A673 (cell line): ENCODE measurements at regions of chr20 and their contacts with region 1.

Region 1: DNA sequence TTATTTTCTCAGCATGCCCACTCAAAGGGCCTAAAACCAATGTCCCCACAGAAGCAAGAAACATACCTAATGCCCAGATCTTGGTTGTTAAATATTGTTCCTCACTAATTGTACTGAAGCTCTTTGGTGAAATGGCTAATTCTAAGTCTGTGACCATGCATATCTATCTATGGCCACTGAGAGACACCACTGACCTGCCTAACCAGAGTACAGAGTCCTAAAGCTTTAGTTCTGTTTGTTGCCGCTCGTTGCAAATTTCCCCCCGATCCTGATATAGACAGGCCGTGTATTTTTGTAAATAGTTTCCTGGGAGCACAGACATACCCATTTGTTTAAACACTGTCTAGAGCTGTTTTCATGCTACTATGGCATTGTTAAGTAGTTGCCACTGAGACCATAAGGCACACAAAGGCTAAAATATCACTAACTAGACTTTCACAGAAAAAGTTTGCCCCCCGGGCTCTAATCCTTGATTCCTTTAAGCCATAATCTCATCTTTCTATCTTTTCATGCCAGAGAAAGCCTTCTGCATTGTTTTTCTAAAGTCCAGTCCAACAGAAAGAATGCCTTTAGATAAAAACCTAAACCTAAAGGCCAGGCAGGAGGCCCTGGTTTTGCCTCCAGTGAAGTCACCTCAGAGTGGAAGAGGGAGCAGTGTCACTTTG is 48.7 kb downstream of the DNAAF9 start:
- DNase-seq: no peak
- H3K4me3 ChIP-seq: no peak overlapping the region
- H3K27ac ChIP-seq: no peak overlapping the region
- H3K4me1 ChIP-seq: no peaks in the 10 kb centered on the region
- H3K27me3 ChIP-seq: no peaks in the 10 kb centered on the region
- CTCF ChIP-seq: no peak

Region 2: GRCh38 chr20:1685304-1686052 is 1673.3 kb before region 1 on chr20:
- CTCF ChIA-PET with region 1: no interaction called
- POLR2A ChIA-PET with region 1: no interaction called
- intact Hi-C with region 1: no loop called
- DNase-seq: no peak
- H3K4me3 ChIP-seq: no peak overlapping the region
- H3K27ac ChIP-seq: no peak overlapping the region
- H3K4me1 ChIP-seq: no peaks in the 10 kb centered on the region
- H3K27me3 ChIP-seq: peaks cover 45% of the 10 kb centered on the region
- CTCF ChIP-seq: no peak

Region 3: GRCh38 chr20:3323398-3323797 is 35.4 kb before region 1 on chr20:
- CTCF ChIA-PET with region 1: interaction called, 13 read pairs
- POLR2A ChIA-PET with region 1: no interaction called
- intact Hi-C with region 1: no loop called
- DNase-seq: no peak
- H3K4me3 ChIP-seq: no peak overlapping the region
- H3K27ac ChIP-seq: no peak overlapping the region
- H3K4me1 ChIP-seq: no peaks in the 10 kb centered on the region
- H3K27me3 ChIP-seq: no peaks in the 10 kb centered on the region
- CTCF ChIP-seq: no peak

Region 4: DNA sequence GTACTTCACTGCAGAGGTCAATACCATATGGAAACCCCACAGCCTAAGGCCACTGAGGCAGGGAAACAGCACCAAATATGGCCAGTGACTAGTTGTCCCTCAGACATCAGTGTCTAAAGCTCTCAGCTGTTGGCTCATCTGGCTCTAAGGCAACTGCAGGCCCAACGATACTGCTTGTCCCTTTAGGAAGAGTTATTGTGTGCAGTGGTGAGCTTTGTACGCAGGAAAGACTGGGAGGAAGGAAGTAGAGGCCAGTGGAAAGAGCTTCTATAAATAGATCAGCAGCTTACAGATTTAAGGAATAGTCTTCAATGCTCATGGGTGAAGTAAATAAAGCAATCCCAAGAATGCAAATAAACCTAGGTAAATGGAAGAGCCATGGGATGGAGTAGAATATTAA is 19.3 kb after region 1 on chr20:
- CTCF ChIA-PET with region 1: no interaction called
- POLR2A ChIA-PET with region 1: no interaction called
- intact Hi-C with region 1: no loop called
- DNase-seq: no peak
- H3K4me3 ChIP-seq: no peak overlapping the region
- H3K27ac ChIP-seq: no peak overlapping the region
- H3K4me1 ChIP-seq: peaks cover 11% of the 10 kb centered on the region
- H3K27me3 ChIP-seq: no peaks in the 10 kb centered on the region
- CTCF ChIP-seq: no peak